ENCODE measurements at regions of chr1 and their contacts with region 1.

Region 1: DNA sequence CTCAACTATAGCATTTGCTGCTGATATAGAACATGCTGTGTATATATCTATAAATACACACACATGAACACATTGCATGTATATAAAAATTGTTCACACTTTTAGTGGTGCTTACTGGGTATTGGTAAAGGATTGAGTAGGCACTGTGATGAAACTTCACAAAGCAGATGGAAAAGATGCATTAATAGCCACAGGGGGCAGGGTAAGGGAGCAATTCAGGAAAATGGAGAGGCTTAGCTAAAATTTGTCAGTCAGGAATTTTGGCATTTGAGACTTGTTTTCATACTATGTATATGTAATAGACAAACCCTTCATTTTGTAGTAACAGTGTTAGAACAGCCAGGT is 633 bp upstream of the PPFIA4 start:
- DNase-seq: no peak
- ATAC-seq: no peak
- H3K4me3 ChIP-seq: no peak overlapping the region
- H3K4me3 Mint-ChIP-seq: peak overlapping the region; percentile 58 to 65 (median 62)
- H3K27ac ChIP-seq: peak overlapping the region; percentile 74
- H3K27ac Mint-ChIP-seq: peak overlapping the region; percentile 70 to 81
- H3K4me1 ChIP-seq: peaks cover 6 to 16% of the 10 kb centered on the region in 2 experiments
- H3K4me1 Mint-ChIP-seq: peaks cover 11 to 20% (median 14%) of the 10 kb centered on the region in 3 donors
- H3K27me3 ChIP-seq: peaks cover 4 to 20% of the 10 kb centered on the region in 2 experiments
- H3K27me3 Mint-ChIP-seq: no peaks in the 10 kb centered on the region

Region 2: DNA sequence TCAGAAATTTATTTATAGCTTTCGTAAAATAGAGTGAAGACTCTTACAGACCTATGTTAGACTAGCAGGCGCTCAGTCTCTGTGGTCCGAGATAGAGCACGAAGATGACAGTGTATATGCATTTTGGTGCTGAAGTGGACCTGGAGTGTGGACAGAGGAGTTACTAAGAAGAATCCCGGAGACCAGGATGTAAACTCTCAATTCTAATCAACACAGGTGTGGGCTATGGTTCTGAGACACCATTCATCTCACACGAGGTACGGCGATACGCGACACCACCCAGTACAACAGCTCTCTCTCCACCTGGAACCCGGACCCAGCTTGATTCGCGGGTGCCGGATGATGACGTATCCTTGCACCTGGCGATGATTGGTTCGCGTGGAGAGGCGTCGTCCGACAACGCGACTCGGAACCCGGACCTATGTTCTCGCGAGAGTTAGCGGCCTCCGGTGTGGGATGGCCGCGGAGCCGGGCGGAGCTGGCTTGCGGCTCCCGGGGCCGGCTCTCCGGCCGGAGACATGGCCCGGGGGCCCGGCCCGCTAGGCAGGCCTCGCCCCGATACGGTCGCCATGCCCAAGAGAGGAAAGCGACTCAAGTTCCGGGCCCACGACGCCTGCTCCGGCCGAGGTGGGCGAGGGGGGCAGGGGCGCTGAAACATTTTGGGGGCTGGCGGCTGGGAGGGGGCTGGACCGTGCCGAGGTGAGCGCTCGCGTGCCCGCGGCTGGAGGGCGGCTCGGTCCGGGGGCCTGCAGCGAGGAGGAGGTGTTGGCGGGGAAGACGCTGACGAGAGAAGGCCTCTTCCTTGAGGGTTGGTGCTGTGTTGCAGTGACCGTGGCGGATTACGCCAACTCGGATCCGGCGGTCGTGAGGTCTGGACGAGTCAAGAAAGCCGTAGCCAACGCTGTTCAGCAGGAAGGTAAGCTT is 18.4 kb before region 1 on chr1 and contains the start of gene TMEM183A:
- CTCF ChIA-PET with region 1: interaction called in 1 of 2 experiments, 6 read pairs
- POLR2A ChIA-PET with region 1: interaction called, 6 to 10 read pairs
- DNase-seq: peak; percentile 83 to 97 (median 93)
- ATAC-seq: peak; percentile 94 to 97 (median 95)
- H3K4me3 ChIP-seq: peak within 1 kb of the TSS; percentile 94 to 97
- H3K4me3 Mint-ChIP-seq: peak within 1 kb of the TSS; percentile 89 to 97 (median 95)
- H3K27ac ChIP-seq: peak within 1 kb of the TSS; percentile 90
- H3K27ac Mint-ChIP-seq: peak within 1 kb of the TSS; percentile 91 to 94
- H3K4me1 ChIP-seq: peaks cover 17 to 20% of the 10 kb centered on the region in 2 experiments
- H3K4me1 Mint-ChIP-seq: peaks cover 34 to 41% (median 36%) of the 10 kb centered on the region in 3 donors
- H3K27me3 ChIP-seq: peaks cover 0 to 3% of the 10 kb centered on the region in 2 experiments
- H3K27me3 Mint-ChIP-seq: no peaks in the 10 kb centered on the region
- total RNA-seq, gene TMEM183A: 67.5 to 124 (median 68.4) TPM

Region 3: DNA sequence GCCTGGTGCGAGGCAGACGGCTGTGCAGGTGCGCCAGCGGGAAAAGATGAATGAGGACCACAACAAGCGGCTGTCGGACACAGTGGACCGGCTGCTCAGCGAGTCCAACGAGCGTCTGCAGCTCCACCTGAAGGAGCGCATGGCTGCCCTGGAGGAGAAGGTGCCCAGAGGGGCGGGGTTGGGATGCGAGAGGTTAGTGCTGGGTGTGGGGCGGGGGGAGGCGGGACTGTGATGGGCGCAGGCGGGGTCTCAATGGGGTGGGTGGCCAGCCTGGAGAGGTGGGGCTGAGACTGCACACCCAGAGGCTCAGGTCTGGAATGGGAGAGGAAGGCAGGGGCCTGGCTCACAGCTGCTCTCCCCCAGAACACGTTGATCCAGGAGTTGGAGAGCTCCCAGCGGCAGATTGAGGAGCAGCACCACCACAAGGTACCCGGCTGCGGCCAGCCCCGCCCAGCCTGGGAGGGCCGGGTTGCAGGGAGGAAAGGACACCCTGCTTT is 22.9 kb after region 1 on chr1:
- CTCF ChIA-PET with region 1: no interaction called
- POLR2A ChIA-PET with region 1: no interaction called
- DNase-seq: no peak
- ATAC-seq: no peak
- H3K4me3 ChIP-seq: no peak overlapping the region
- H3K4me3 Mint-ChIP-seq: no peak overlapping the region
- H3K27ac ChIP-seq: no peak overlapping the region
- H3K27ac Mint-ChIP-seq: no peak overlapping the region
- H3K4me1 ChIP-seq: no peaks in the 10 kb centered on the region
- H3K4me1 Mint-ChIP-seq: no peaks in the 10 kb centered on the region
- H3K27me3 ChIP-seq: peaks cover 0 to 32% of the 10 kb centered on the region in 2 experiments
- H3K27me3 Mint-ChIP-seq: peaks cover 5 to 25% of the 10 kb centered on the region in 2 donors

Region 4: GRCh38 chr1:203172128-203173010 is 146.7 kb after region 1 on chr1:
- CTCF ChIA-PET with region 1: no interaction called
- POLR2A ChIA-PET with region 1: no interaction called
- DNase-seq: peak in 24 of 35 experiments; percentile 4 to 55 (median 24)
- ATAC-seq: peak in 1 of 4 experiments; percentile 32
- H3K4me3 ChIP-seq: no peak overlapping the region
- H3K4me3 Mint-ChIP-seq: no peak overlapping the region
- H3K27ac ChIP-seq: no peak overlapping the region
- H3K27ac Mint-ChIP-seq: no peak overlapping the region
- H3K4me1 ChIP-seq: no peaks in the 10 kb centered on the region
- H3K4me1 Mint-ChIP-seq: no peaks in the 10 kb centered on the region
- H3K27me3 ChIP-seq: peaks cover 0 to 25% of the 10 kb centered on the region in 2 experiments
- H3K27me3 Mint-ChIP-seq: peaks cover 0 to 2% of the 10 kb centered on the region in 2 donors